ENCODE measurements at regions of chr20 and their contacts with region 1.

Region 1: GRCh38 chr20:49323622-49324238 is 45.9 kb upstream of the ZNFX1 start:
- DNase-seq: peak; percentile 36 to 72 (median 54)
- ATAC-seq: peak; percentile 82
- H3K4me3 ChIP-seq: no peak overlapping the region
- H3K27ac ChIP-seq: no peak overlapping the region; the same call in 2 of the 3 replicates
- H3K4me1 ChIP-seq: peaks cover 16 to 18% of the 10 kb centered on the region in 2 experiments; a peak in 4 of 5 replicates
- H3K27me3 ChIP-seq: peaks cover 35 to 38% of the 10 kb centered on the region in 2 experiments
- CTCF ChIP-seq: peak; percentile 62 to 81 (median 65)
- EP300 ChIP-seq: peak; percentile 38; the same call in 1 of the 2 replicates
- POLR2A ChIP-seq: no peak
- RAD21 ChIP-seq: peak; percentile 71 to 88

Region 2: DNA sequence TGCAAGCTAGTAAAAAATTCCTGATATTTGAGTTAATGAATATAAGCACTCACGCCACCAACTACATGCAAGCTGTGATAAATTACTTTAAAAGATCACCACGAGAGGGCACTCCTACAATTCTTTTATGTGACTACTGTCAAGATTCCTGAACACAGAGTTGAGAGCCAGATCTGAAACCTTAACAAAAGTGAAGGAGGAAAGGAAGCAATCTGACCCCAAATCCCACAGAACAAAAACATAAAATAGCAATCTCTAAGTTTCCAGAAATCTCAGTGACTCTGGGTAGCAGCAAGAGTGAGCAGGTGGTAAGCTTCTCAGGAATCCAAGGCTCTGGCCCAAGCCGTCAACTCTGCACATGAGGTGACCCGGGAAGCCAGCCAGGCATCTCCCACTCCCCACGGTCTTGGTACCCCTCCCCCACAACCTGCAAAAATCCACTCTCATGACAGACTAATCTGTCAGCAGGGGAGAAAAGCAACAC is 190.7 kb before region 1 on chr20:
- CTCF ChIA-PET with region 1: interaction called, 3 read pairs
- POLR2A ChIA-PET with region 1: interaction called, 3 read pairs
- in situ Hi-C with region 1: no loop called
- intact Hi-C with region 1: loop called (anchors 1 kb)
- DNase-seq: peak; percentile 30 to 66 (median 38)
- ATAC-seq: peak; percentile 82
- H3K4me3 ChIP-seq: no peak overlapping the region
- H3K27ac ChIP-seq: no peak overlapping the region
- H3K4me1 ChIP-seq: peaks cover 3 to 6% of the 10 kb centered on the region in 2 experiments; a peak in 2 of 5 replicates
- H3K27me3 ChIP-seq: no peaks in the 10 kb centered on the region
- CTCF ChIP-seq: peak; percentile 52 to 70 (median 52); a peak in 5 of 6 replicates
- EP300 ChIP-seq: no peak
- POLR2A ChIP-seq: no peak
- RAD21 ChIP-seq: peak; percentile 52 to 76

Region 3: DNA sequence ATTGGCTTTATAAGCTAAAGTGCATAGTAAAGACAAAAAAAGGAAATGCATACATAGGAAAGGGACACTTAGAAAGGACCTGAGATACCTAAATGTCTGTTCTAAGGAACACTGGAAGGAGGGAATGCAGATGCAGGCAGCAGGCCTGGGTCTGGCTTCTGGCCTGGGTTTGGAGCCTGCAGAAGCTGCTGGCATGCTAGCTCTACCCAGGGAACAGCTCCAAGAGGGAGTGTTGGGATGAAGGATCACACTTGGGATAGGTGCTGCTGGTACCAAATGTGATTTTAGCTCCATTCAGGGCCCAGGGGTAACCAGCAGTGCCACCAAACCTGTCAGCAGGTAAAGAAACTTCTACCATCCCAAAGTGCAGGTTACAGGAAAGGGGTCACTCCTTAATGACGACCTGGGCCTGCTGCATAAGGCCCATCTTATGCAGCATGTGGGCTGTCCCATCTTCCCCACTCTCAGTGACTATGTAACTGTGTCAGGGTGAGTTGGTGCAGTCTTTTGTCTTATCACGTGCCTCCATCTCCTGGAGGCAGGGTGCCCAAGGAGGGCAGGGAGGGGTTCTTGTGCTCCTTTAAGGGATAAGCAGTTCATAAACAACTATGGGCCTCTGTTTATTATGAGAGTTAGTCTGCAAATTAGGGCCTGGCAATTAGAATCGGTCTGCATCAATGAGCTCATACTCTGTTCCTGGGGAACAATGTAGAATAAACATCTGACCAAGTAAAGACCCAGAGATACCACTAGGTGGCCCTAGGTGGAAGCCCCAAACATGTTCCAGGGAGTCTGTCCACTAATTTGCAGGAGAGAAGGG is 77.6 kb before region 1 on chr20:
- CTCF ChIA-PET with region 1: interaction called, 10 read pairs
- POLR2A ChIA-PET with region 1: no interaction called
- in situ Hi-C with region 1: loop called (anchors 5 kb)
- intact Hi-C with region 1: loop called (anchors 1 kb)
- DNase-seq: peak; percentile 50 to 67 (median 62)
- ATAC-seq: peak; percentile 96
- H3K4me3 ChIP-seq: no peak overlapping the region
- H3K27ac ChIP-seq: no peak overlapping the region
- H3K4me1 ChIP-seq: no peaks in the 10 kb centered on the region
- H3K27me3 ChIP-seq: no peaks in the 10 kb centered on the region
- CTCF ChIP-seq: peak; percentile 73 to 86 (median 79)
- EP300 ChIP-seq: no peak
- POLR2A ChIP-seq: peak; percentile 61
- RAD21 ChIP-seq: peak; percentile 54 to 74

Region 4: DNA sequence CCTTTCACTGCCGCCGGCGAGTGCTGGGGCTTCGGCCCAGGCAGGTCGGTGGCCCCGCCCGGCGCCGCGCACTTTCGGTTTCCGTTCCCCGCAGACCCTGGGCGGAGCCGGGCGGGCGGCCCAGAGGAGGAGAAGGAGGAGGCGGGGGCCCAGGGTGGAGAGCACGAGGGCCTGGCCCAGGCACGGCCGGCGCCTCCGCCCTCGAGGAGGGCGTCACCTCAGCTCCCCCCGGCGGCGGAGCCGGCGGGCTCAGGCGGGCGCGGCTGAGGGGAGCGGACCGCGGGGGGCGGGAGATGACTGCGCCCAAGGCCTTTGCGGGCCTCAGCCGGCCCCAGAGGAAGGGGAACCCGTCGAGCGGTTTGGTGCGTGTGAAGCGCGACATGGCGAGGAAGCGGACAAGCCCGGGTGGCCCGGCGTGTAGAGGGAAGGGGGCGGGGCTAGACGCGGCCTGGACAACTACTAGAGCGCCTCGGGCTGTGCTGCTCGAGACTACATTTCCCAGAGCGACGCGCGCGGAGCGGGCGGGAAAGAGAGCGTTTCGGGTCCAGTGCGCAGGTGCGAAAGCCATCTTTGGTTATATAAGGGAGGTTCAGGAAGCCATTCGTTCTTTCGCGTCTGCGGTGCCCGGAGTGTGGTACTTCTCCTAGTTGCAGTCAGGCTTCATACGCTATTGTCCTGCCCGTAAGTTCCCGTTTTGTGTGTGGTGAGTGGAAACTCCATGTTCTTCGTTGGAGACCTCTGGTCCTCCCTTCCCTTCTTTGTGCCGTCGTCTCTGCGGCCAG is 45.5 kb before region 1 on chr20 and contains the start of gene ZNFX1:
- CTCF ChIA-PET with region 1: interaction called, 3 read pairs
- POLR2A ChIA-PET with region 1: interaction called, 4 read pairs
- in situ Hi-C with region 1: no loop called
- intact Hi-C with region 1: loop called (anchors 5 kb)
- DNase-seq: peak; percentile 92 to 98 (median 95)
- ATAC-seq: peak; percentile 94
- H3K4me3 ChIP-seq: peak within 1 kb of the TSS; percentile 93
- H3K27ac ChIP-seq: peak within 1 kb of the TSS; percentile 95
- H3K4me1 ChIP-seq: peaks cover 13 to 19% of the 10 kb centered on the region in 2 experiments
- H3K27me3 ChIP-seq: no peaks in the 10 kb centered on the region
- CTCF ChIP-seq: peak in 2 of 3 experiments; percentile 25 to 29; a peak in 1 of 6 replicates
- EP300 ChIP-seq: no peak
- POLR2A ChIP-seq: peak; percentile 100
- RAD21 ChIP-seq: peak in 1 of 2 experiments; percentile 6; a peak in 1 of 4 replicates
- polyA plus RNA-seq, gene ZNFX1: 4.4 to 4.9 TPM

Region 5: DNA sequence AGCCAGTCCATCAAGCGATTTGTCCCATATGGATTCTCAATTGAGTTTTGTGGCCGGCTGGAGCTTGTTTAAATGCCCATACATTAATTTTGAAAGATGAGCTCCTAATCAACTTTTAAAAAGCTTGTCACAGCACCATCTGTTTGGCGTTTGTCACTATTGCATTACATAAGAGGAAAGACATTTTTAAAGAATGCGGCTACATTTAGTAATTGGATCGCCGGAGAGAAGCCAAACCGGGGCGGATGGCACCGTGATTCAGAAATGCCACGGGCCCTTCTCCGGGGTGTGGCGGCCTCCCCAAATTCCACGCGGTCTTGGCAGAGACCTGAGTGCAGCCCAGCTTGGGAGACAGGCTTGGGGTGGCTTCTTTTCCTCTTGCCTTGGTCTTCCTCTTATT is 21.8 kb after region 1 on chr20:
- CTCF ChIA-PET with region 1: no interaction called
- POLR2A ChIA-PET with region 1: no interaction called
- in situ Hi-C with region 1: no loop called
- intact Hi-C with region 1: no loop called
- DNase-seq: no peak
- ATAC-seq: no peak
- H3K4me3 ChIP-seq: no peak overlapping the region
- H3K27ac ChIP-seq: no peak overlapping the region
- H3K4me1 ChIP-seq: no peaks in the 10 kb centered on the region
- H3K27me3 ChIP-seq: peaks cover 29 to 40% of the 10 kb centered on the region in 2 experiments
- CTCF ChIP-seq: no peak
- EP300 ChIP-seq: no peak
- POLR2A ChIP-seq: no peak
- RAD21 ChIP-seq: no peak

Region 6: GRCh38 chr20:49411221-49411925 is 87.6 kb after region 1 on chr20:
- CTCF ChIA-PET with region 1: no interaction called
- POLR2A ChIA-PET with region 1: no interaction called
- in situ Hi-C with region 1: no loop called
- intact Hi-C with region 1: no loop called
- DNase-seq: peak in 2 of 4 experiments; percentile 33 to 58
- ATAC-seq: peak; percentile 58
- H3K4me3 ChIP-seq: no peak overlapping the region
- H3K27ac ChIP-seq: no peak overlapping the region
- H3K4me1 ChIP-seq: peaks cover 0 to 2% of the 10 kb centered on the region in 2 experiments; a peak in 1 of 5 replicates
- H3K27me3 ChIP-seq: peaks cover 33 to 67% of the 10 kb centered on the region in 2 experiments
- CTCF ChIP-seq: no peak
- EP300 ChIP-seq: no peak
- POLR2A ChIP-seq: no peak
- RAD21 ChIP-seq: no peak

Measured in K562 (cell line).